Transverse colon (tissue), 4 donors: ENCODE measurements at regions of chr5 and their contacts with region 1.

Region 1: DNA sequence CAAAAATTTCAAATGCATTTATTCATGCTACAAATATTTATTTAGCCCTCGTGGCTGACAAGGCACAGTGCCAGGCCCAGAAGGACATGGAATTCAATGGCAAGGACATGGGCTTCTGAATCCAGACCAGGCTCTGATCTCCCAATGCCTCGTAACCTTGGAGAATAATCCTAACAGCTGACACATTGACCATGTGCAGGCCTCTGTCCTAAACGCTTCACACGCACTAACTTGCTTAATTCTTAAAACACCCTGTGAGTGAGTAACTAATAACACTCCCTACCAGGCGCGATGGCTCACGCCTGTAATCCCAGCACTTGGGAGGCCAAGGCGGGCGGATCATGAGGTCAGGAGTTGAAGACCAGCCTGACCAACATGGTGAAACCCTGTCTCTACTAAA is 33.2 kb downstream of the MYO10 start:
- DNase-seq: no peak
- H3K4me3 ChIP-seq: no peak overlapping the region
- H3K27ac ChIP-seq: no peak overlapping the region
- H3K4me1 ChIP-seq: peaks cover 1 to 15% (median 7%) of the 10 kb centered on the region in 4 donors
- H3K27me3 ChIP-seq: no peaks in the 10 kb centered on the region
- CTCF ChIP-seq: no peak
- EP300 ChIP-seq: no peak
- POLR2A ChIP-seq: no peak

Region 2: GRCh38 chr5:15376803-15377202 is 1526.0 kb before region 1 on chr5:
- in situ Hi-C with region 1: no loop called
- intact Hi-C with region 1: loop called (anchors 5 kb)
- DNase-seq: no peak
- H3K4me3 ChIP-seq: no peak overlapping the region
- H3K27ac ChIP-seq: no peak overlapping the region
- H3K4me1 ChIP-seq: no peaks in the 10 kb centered on the region
- H3K27me3 ChIP-seq: no peaks in the 10 kb centered on the region
- CTCF ChIP-seq: no peak
- EP300 ChIP-seq: no peak
- POLR2A ChIP-seq: no peak

Region 3: DNA sequence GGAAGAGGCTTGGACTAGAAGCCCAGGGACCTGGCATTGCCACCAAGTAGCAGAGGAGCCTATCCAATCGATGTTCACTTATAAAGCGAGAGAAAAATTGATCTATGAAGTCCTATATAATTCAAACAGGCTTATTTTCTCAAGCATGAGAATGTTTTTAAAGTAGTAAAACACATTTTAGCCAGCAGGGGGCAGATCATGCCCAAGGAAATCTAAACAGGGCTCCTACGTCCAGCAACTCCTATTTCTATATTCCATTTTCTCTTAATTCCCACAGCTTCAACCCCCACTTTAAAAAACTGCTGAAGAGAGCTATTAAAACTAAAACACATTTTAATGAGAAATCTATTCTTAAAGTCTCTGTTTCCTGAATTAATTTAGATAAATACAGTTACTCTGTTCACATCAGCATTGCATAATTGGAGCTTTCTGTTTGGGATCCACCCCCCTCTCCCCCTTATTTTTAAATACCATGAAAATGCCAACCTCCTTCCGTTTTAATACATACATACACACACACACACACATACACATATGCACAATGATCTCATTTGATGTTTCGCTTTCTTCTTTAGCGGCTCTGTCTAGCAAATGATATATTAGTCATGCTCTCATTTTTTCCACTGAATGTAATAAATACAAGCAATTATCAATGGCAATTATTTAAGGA is 111.7 kb before region 1 on chr5:
- in situ Hi-C with region 1: no loop called
- intact Hi-C with region 1: no loop called
- DNase-seq: no peak
- H3K4me3 ChIP-seq: no peak overlapping the region
- H3K27ac ChIP-seq: no peak overlapping the region
- H3K4me1 ChIP-seq: peaks cover 0 to 4% (median 0%) of the 10 kb centered on the region in 4 donors
- H3K27me3 ChIP-seq: no peaks in the 10 kb centered on the region
- CTCF ChIP-seq: peak; percentile 69 to 77 (median 74)
- EP300 ChIP-seq: no peak
- POLR2A ChIP-seq: no peak